Head of caudate nucleus (tissue), 42 donors: ENCODE measurements at regions of chr17 and their contacts with region 1.

Region 1: GRCh38 chr17:38799378-38800236 is at the start of gene PIP4K2B:
- DNase-seq: peak; percentile 89 to 98 (median 95)

Region 2: GRCh38 chr17:38509008-38509771 is 290.4 kb before region 1 on chr17:
- intact Hi-C with region 1: no loop called
- DNase-seq: peak; percentile 64 to 90 (median 78)

Region 3: GRCh38 chr17:38748149-38748891 is 51.3 kb before region 1 on chr17 and contains the start of gene PCGF2:
- intact Hi-C with region 1: loop called (anchors 5 kb)
- DNase-seq: peak; percentile 68 to 96 (median 88)

Region 4: DNA sequence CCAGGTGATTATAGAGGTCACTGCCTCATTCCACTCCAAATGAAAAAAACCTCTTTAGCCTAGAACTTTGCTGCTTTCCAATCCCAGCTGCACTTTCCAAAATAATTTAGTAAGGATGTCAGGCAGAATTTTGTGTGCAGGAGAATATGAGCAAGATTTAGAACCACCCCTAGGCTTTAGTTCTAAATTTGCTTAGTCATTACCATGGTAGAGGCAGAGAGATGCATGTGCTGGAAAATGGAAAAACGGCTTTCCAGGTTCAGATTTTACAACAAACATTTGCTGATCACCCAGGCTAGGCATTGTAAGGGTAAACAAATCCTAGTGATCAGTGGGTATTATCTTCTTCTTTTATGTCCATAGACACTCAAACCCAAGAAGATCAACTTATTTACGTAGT is 1966.0 kb after region 1 on chr17:
- intact Hi-C with region 1: no loop called
- DNase-seq: no peak